ENCODE measurements at regions of chr6 and their contacts with region 1.

Region 1: DNA sequence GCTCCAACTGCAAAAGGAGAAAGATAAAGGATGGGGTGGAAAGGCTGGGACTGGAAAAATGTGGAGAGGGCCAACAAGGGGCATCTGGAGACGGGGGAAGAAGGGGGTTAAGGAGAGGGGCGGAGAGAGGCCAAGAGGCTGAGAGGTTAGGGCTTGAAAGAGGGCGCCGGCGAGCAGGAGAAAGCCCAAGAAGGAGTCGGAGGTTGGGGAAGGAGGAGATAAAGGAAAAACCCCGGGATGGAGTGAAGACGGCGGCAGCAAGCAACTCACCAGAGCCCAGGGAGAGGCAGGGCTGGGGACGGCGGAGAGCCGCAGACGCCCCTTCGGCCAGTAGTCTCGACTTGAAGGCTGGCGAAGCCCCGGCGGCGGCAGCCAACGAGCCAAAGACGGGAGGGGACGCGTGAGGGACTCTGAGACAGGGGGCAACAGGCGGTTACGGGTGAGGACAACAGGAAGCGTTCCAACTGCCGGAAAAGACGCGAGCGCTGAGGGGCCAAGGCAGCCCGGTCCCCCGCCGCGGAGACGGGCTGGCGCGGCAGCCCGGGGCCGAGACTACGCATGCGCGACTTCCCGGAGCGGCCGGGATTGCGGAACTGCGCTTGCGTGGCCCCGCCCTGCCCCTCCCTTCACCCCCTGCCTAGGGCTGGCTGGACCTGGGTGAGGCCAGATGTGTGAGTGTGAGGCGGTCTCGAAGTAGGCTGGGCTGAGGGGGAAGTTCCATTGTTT is at the start of gene STK38:
- DNase-seq: peak; percentile 97
- H3K4me3 ChIP-seq: peak within 1 kb of the TSS; percentile 71 to 99 (median 94)
- H3K27ac ChIP-seq: peak within 1 kb of the TSS; percentile 93 to 100 (median 99)
- H3K4me1 ChIP-seq: peaks cover 14 to 41% (median 28%) of the 10 kb centered on the region in 4 donors
- H3K27me3 ChIP-seq: no peaks in the 10 kb centered on the region
- CTCF ChIP-seq: peak in 1 of 5 experiments; percentile 7
- EP300 ChIP-seq: peak; percentile 45
- POLR2A ChIP-seq: peak; percentile 98
- total RNA-seq, gene STK38: 59.1 to 101 (median 86.4) TPM

Region 2: GRCh38 chr6:36442671-36443470 is 104.2 kb before region 1 on chr6 and contains the starts of genes KCTD20 and PXT1:
- in situ Hi-C with region 1: no loop called
- intact Hi-C with region 1: loop called (anchors 5 kb)
- DNase-seq: peak; percentile 91
- H3K4me3 ChIP-seq: peak within 1 kb of the TSS; percentile 63 to 89 (median 73)
- H3K27ac ChIP-seq: peak within 1 kb of the TSS; percentile 91 to 98 (median 96)
- H3K4me1 ChIP-seq: peaks cover 21 to 40% (median 31%) of the 10 kb centered on the region in 4 donors
- H3K27me3 ChIP-seq: no peaks in the 10 kb centered on the region
- CTCF ChIP-seq: no peak
- EP300 ChIP-seq: no peak
- POLR2A ChIP-seq: peak; percentile 69
- total RNA-seq, gene KCTD20: 23.2 to 61.9 (median 29.9) TPM
- total RNA-seq, gene PXT1: 0.14 TPM in 1 of 4 donors, not detected in the others

Region 3: GRCh38 chr6:36594029-36594815 is 47.1 kb after region 1 on chr6 and contains the start of gene SRSF3:
- in situ Hi-C with region 1: no loop called
- intact Hi-C with region 1: loop called (anchors 5 kb)
- DNase-seq: peak; percentile 97
- H3K4me3 ChIP-seq: peak within 1 kb of the TSS; percentile 52 to 92 (median 80)
- H3K27ac ChIP-seq: peak within 1 kb of the TSS; percentile 96 to 100 (median 98)
- H3K4me1 ChIP-seq: peaks cover 21 to 40% (median 30%) of the 10 kb centered on the region in 4 donors
- H3K27me3 ChIP-seq: no peaks in the 10 kb centered on the region
- CTCF ChIP-seq: peak; percentile 37 to 77 (median 49)
- EP300 ChIP-seq: no peak
- POLR2A ChIP-seq: peak; percentile 100
- total RNA-seq, gene SRSF3: 110 to 177 (median 144) TPM

Region 4: GRCh38 chr6:36858407-36858981 is 311.4 kb after region 1 on chr6:
- in situ Hi-C with region 1: no loop called
- intact Hi-C with region 1: no loop called
- DNase-seq: no peak
- H3K4me3 ChIP-seq: no peak overlapping the region
- H3K27ac ChIP-seq: peak overlapping the region in 3 of 4 donors; percentile 9 to 48 (median 29)
- H3K4me1 ChIP-seq: peaks cover 0 to 3% (median 0%) of the 10 kb centered on the region in 4 donors
- H3K27me3 ChIP-seq: no peaks in the 10 kb centered on the region
- CTCF ChIP-seq: no peak
- EP300 ChIP-seq: no peak
- POLR2A ChIP-seq: no peak

Measured in transverse colon (tissue), 4 donors.